ENCODE measurements at regions of chr2 and their contacts with region 1.

Region 1: GRCh38 chr2:25497918-25498407 is 156.2 kb upstream of the DNMT3A start:
- DNase-seq: no peak
- ATAC-seq: no peak
- H3K4me3 ChIP-seq: no peak overlapping the region
- H3K27ac ChIP-seq: no peak overlapping the region
- H3K4me1 ChIP-seq: no peaks in the 10 kb centered on the region
- H3K27me3 ChIP-seq: no peaks in the 10 kb centered on the region
- CTCF ChIP-seq: no peak
- POLR2A ChIP-seq: no peak
- RAD21 ChIP-seq: no peak

Region 2: DNA sequence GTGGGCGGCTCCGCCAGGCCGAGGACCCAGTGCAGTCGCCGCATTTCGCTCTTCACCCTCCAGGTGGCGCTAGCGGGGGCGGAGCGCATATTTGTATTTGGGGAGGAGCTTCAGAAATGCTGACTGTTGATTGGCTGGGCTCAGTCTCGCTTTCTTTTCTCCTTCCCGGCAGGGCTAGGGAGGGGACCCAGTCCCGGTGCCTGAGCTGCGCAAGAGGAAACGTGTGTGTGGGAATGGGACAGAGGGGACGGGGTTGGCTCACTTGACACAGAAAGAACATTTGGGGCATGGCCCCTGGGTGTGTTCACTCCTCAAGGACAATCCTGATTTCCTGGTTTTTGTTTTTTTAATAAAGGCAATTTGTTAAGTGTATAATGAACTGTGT is 135.9 kb before region 1 on chr2:
- CTCF ChIA-PET with region 1: no interaction called
- POLR2A ChIA-PET with region 1: interaction called, 17 read pairs
- dilution Hi-C with region 1: no loop called
- in situ Hi-C with region 1: no loop called
- intact Hi-C with region 1: no loop called
- DNase-seq: peak; percentile 88
- ATAC-seq: peak; percentile 99
- H3K4me3 ChIP-seq: peak overlapping the region; percentile 32
- H3K27ac ChIP-seq: no peak overlapping the region
- H3K4me1 ChIP-seq: no peaks in the 10 kb centered on the region
- H3K27me3 ChIP-seq: no peaks in the 10 kb centered on the region; the same call in 1 of the 2 replicates
- CTCF ChIP-seq: peak; percentile 93
- POLR2A ChIP-seq: no peak; the same call in 1 of the 2 replicates
- RAD21 ChIP-seq: peak; percentile 48